Activated CD4-positive, alpha-beta T cell treated with anti-CD3 and anti-CD28 coated beads for 36 hours (primary cell): ENCODE measurements at regions of chr10 and their contacts with region 1.

Region 1: DNA sequence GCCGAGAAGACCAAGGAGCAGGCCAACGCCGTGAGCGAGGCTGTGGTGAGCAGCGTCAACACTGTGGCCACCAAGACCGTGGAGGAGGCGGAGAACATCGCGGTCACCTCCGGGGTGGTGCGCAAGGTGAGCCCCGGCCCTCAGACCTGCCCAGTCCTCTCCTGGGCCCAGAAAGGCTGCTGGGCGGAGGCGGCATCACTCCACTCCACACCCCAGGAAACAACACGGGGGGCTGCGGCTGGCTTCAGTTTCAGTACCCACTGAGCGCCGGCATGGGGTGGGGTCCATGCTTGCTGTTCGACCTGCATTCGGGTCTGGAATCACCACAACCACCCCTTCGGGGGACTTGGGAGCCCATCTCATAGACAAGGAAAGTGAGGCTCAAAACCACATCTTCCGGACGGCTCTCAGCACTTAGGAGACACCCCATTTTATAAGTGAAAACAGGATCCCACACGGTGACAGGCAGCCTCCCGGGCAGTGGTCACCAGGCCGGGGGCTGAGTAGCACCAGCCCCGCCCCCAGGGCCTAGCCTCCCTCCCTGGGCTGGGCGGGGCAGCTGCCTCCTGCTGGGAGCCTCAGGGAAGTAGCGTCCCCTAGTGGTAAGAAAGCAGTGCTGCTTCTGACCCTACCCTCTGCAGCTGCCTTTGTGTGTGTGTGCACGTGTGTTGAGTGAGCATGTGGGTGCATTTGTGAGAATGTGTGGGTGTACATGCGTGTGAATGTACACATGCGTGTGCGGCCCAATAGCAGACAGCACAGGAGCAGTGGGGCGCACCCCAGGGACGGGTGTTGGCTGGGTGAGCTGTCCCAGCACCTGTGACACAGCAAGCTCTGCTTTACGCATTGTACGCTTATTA is 1.8 kb downstream of the SNCG start:
- DNase-seq: peak; percentile 69
- ATAC-seq: peak; percentile 94
- H3K4me3 Mint-ChIP-seq: no peak overlapping the region
- H3K27ac Mint-ChIP-seq: no peak overlapping the region
- H3K4me1 Mint-ChIP-seq: no peaks in the 10 kb centered on the region
- H3K27me3 Mint-ChIP-seq: no peaks in the 10 kb centered on the region

Region 2: GRCh38 chr10:86688398-86688921 is 271.8 kb before region 1 on chr10:
- CTCF ChIA-PET with region 1: interaction called, 5 read pairs
- POLR2A ChIA-PET with region 1: no interaction called
- intact Hi-C with region 1: loop called in 1 of 2 experiments (anchors 1 kb)
- DNase-seq: peak; percentile 72
- ATAC-seq: peak; percentile 94
- H3K4me3 Mint-ChIP-seq: no peak overlapping the region
- H3K27ac Mint-ChIP-seq: no peak overlapping the region
- H3K4me1 Mint-ChIP-seq: no peaks in the 10 kb centered on the region
- H3K27me3 Mint-ChIP-seq: no peaks in the 10 kb centered on the region

Region 3: DNA sequence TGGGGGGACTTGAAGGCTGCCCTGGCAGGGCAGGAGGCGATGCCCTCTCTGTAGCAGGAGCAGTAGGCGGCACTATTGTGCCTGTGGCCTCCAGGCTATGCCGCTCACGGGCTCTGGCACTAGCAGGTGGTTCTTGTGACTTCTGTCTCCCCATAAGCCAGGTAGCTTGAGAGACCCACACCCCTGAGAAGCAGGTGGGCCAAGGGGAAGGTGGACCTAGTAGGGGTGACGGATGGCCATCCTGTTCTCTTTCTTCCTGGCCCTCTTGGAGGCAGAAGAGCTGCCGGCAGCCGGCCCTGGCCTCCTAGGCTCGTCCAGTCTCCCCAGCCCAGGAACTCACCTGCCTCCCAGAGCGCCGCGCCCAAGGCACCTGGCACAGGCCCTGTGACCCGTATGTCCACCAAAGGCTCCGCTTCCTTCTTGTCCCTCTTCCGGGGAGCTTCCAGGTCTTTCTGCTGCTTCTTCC is 18.2 kb before region 1 on chr10:
- CTCF ChIA-PET with region 1: interaction called, 19 read pairs
- POLR2A ChIA-PET with region 1: no interaction called
- intact Hi-C with region 1: loop called in 1 of 2 experiments (anchors 1 kb)
- DNase-seq: no peak
- ATAC-seq: no peak
- H3K4me3 Mint-ChIP-seq: no peak overlapping the region
- H3K27ac Mint-ChIP-seq: no peak overlapping the region
- H3K4me1 Mint-ChIP-seq: no peaks in the 10 kb centered on the region
- H3K27me3 Mint-ChIP-seq: no peaks in the 10 kb centered on the region

Region 4: GRCh38 chr10:86971232-86971991 is 11.2 kb after region 1 on chr10:
- CTCF ChIA-PET with region 1: interaction called, 10 read pairs
- POLR2A ChIA-PET with region 1: no interaction called
- intact Hi-C with region 1: no loop called
- DNase-seq: peak; percentile 88
- ATAC-seq: peak; percentile 78
- H3K4me3 Mint-ChIP-seq: peak overlapping the region; percentile 70
- H3K27ac Mint-ChIP-seq: peak overlapping the region; percentile 80
- H3K4me1 Mint-ChIP-seq: peaks cover 26% of the 10 kb centered on the region
- H3K27me3 Mint-ChIP-seq: peaks cover 10% of the 10 kb centered on the region